Heart left ventricle (tissue), 16 donors: ENCODE measurements at regions of chr7 and their contacts with region 1.

Region 1: GRCh38 chr7:81499262-81500116 is 270.4 kb downstream of the HGF start:
- DNase-seq: peak in 1 of 5 donors; percentile 22
- ATAC-seq: peak; percentile 64 to 92 (median 76)
- H3K4me3 ChIP-seq: no peak overlapping the region
- H3K27ac ChIP-seq: peak overlapping the region in 7 of 12 donors; percentile 4 to 66 (median 38)
- H3K4me1 ChIP-seq: peaks cover 0 to 26% (median 8%) of the 10 kb centered on the region in 12 donors
- H3K27me3 ChIP-seq: no peaks in the 10 kb centered on the region
- CTCF ChIP-seq: peak; percentile 15 to 75 (median 59)
- POLR2A ChIP-seq: no peak

Region 2: GRCh38 chr7:81715984-81716588 is 216.6 kb after region 1 on chr7:
- intact Hi-C with region 1: loop called in 7 of 10 experiments (anchors 5 to 10 kb)
- DNase-seq: no peak
- ATAC-seq: peak in 1 of 4 donors; percentile 47
- H3K4me3 ChIP-seq: no peak overlapping the region
- H3K27ac ChIP-seq: no peak overlapping the region
- H3K4me1 ChIP-seq: no peaks in the 10 kb centered on the region
- H3K27me3 ChIP-seq: no peaks in the 10 kb centered on the region
- CTCF ChIP-seq: peak in 8 of 12 donors; percentile 6 to 53 (median 32)
- POLR2A ChIP-seq: no peak

Region 3: GRCh38 chr7:81769891-81770727 is 270.6 kb after region 1 on chr7 and contains the start of gene HGF:
- intact Hi-C with region 1: loop called in 3 of 10 experiments (anchors 5 to 10 kb)
- DNase-seq: peak; percentile 55 to 81 (median 72)
- ATAC-seq: peak; percentile 42 to 83 (median 82)
- H3K4me3 ChIP-seq: peak within 1 kb of the TSS; percentile 12 to 67 (median 48)
- H3K27ac ChIP-seq: peak within 1 kb of the TSS; percentile 3 to 79 (median 48)
- H3K4me1 ChIP-seq: peaks cover 0 to 27% (median 0%) of the 10 kb centered on the region in 12 donors
- H3K27me3 ChIP-seq: no peaks in the 10 kb centered on the region
- CTCF ChIP-seq: peak in 4 of 12 donors; percentile 23 to 44 (median 36)
- POLR2A ChIP-seq: no peak
- total RNA-seq, gene HGF: 1.9 to 16.1 (median 3.4) TPM

Region 4: GRCh38 chr7:81956520-81956919 is 457.0 kb after region 1 on chr7:
- intact Hi-C with region 1: loop called in 9 of 10 experiments (anchors 1 to 5 kb)
- DNase-seq: no peak
- ATAC-seq: peak; percentile 73 to 87 (median 84)
- H3K4me3 ChIP-seq: no peak overlapping the region
- H3K27ac ChIP-seq: peak overlapping the region in 1 of 12 donors; percentile 64
- H3K4me1 ChIP-seq: peaks cover 0 to 22% (median 7%) of the 10 kb centered on the region in 12 donors
- H3K27me3 ChIP-seq: no peaks in the 10 kb centered on the region
- CTCF ChIP-seq: peak; percentile 18 to 62 (median 40)
- POLR2A ChIP-seq: no peak

Region 5: DNA sequence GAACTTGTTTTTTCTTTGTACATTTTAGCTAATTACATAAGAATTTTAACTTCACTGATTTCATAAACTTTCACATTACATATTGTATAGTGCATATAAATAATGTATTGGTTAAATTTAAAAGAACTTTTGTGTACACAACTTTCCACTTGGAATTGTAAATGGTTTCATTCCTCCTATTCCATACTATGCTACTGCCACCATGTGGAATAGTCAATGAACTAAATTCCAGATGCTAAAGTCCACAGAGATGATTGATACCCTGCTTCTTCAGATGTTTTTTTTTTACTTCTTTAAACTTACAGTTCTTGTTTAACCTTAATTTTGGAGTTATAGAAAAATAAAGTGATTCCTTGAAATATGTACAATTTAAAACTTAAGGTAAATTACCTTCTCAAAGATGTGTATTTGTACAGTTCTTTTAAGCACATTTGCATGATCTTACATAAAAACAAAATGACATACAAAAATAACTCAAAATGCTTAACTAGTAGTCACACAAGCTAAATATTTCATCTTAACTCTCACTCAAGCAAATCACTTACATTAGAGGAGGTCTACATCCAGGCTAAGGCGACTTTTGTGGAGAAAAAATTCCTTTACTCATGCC is 518.0 kb after region 1 on chr7:
- intact Hi-C with region 1: loop called in 6 of 10 experiments (anchors 5 to 10 kb)
- DNase-seq: no peak
- ATAC-seq: no peak
- H3K4me3 ChIP-seq: no peak overlapping the region
- H3K27ac ChIP-seq: no peak overlapping the region
- H3K4me1 ChIP-seq: peaks cover 0 to 28% (median 2%) of the 10 kb centered on the region in 12 donors
- H3K27me3 ChIP-seq: no peaks in the 10 kb centered on the region
- CTCF ChIP-seq: peak; percentile 11 to 55 (median 42)
- POLR2A ChIP-seq: no peak